HepG2 (cell line): ENCODE measurements at regions of chr9 and their contacts with region 1.

Region 1: GRCh38 chr9:124771021-124771866 is at the start of gene NR6A1:
- DNase-seq: peak; percentile 92
- ATAC-seq: peak; percentile 89
- H3K4me3 ChIP-seq: peak within 1 kb of the TSS; percentile 93 to 96 (median 95)
- H3K27ac ChIP-seq: peak within 1 kb of the TSS; percentile 81
- H3K4me1 ChIP-seq: peaks cover 52% of the 10 kb centered on the region
- H3K27me3 ChIP-seq: peaks cover 0 to 11% of the 10 kb centered on the region in 2 experiments; a peak in 3 of 5 replicates
- CTCF ChIP-seq: no peak; the same call in 1 of the 2 replicates
- EP300 ChIP-seq: peak in 1 of 2 experiments; percentile 11; a peak in 1 of 4 replicates
- POLR2A ChIP-seq: peak; percentile 65 to 69
- RAD21 ChIP-seq: no peak; the same call in 1 of the 2 replicates
- total RNA-seq, gene NR6A1: 31.5 and 50.9 TPM in 2 replicates

Region 2: GRCh38 chr9:124818431-124819281 is 47.4 kb after region 1 on chr9:
- CTCF ChIA-PET with region 1: interaction called, 6 read pairs
- POLR2A ChIA-PET with region 1: interaction called, 10 read pairs
- in situ Hi-C with region 1: no loop called
- intact Hi-C with region 1: loop called (anchors 5 kb)
- DNase-seq: peak; percentile 90
- ATAC-seq: peak; percentile 91
- H3K4me3 ChIP-seq: peak overlapping the region; percentile 48 to 72 (median 54)
- H3K27ac ChIP-seq: peak overlapping the region; percentile 63
- H3K4me1 ChIP-seq: peaks cover 46% of the 10 kb centered on the region
- H3K27me3 ChIP-seq: no peaks in the 10 kb centered on the region
- CTCF ChIP-seq: no peak; the same call in 1 of the 2 replicates
- EP300 ChIP-seq: 0 out of 4 replicates have a peak, but pooled peaks have one; percentile 13 to 19
- POLR2A ChIP-seq: peak; percentile 41 to 67; a peak in 3 of 4 replicates
- RAD21 ChIP-seq: 0 out of 2 replicates have a peak, but pooled peaks have one; percentile 29

Region 3: DNA sequence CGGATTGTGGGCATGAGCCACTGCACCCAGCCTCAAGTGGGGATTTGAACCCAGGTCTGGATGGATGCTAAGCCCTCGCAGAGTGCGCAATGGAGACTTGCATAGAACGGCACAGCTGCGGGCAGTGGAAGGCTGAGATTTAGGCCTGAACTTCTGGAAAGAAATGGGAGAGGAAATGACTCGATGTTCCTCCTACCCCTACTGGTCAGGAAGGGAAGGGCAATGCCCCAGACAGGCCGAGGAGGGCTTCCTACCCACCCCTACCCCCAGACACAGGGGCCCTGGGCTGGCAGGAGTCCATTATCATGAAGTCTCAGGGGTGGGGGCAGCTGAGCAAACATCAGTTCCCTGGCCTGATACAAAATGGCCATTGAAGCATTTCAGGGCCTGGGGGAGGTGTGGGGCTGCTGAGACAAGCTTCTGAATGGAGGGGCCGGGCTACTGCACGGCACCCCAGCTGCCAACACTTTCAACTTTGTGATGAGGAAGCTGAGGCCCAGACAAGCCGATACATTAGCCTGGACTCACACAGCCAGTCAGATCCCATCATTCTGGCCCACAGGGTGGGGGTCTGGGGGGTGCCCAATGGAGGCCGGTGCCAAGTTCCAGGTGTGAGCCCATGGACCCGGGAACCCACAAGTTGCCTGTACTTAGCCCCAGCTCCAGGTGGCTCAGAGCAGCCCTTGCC is 68.5 kb after region 1 on chr9:
- CTCF ChIA-PET with region 1: interaction called, 12 read pairs
- POLR2A ChIA-PET with region 1: no interaction called
- in situ Hi-C with region 1: no loop called
- intact Hi-C with region 1: no loop called
- DNase-seq: peak; percentile 43
- ATAC-seq: peak; percentile 73
- H3K4me3 ChIP-seq: peak overlapping the region in 1 of 3 experiments; percentile 60; a peak in 1 of 6 replicates
- H3K27ac ChIP-seq: no peak overlapping the region
- H3K4me1 ChIP-seq: peaks cover 34% of the 10 kb centered on the region
- H3K27me3 ChIP-seq: peaks cover 0 to 6% of the 10 kb centered on the region in 2 experiments; a peak in 2 of 5 replicates
- CTCF ChIP-seq: peak; percentile 58
- EP300 ChIP-seq: no peak
- POLR2A ChIP-seq: no peak
- RAD21 ChIP-seq: no peak

Region 4: GRCh38 chr9:124852829-124853531 is 81.7 kb after region 1 on chr9 and contains the start of gene WDR38:
- CTCF ChIA-PET with region 1: interaction called, 167 read pairs
- POLR2A ChIA-PET with region 1: interaction called, 39 read pairs
- in situ Hi-C with region 1: loop called (anchors 5 kb)
- intact Hi-C with region 1: loop called (anchors 1 kb)
- DNase-seq: peak; percentile 77
- ATAC-seq: peak; percentile 79
- H3K4me3 ChIP-seq: peak within 1 kb of the TSS; percentile 24 to 69 (median 54); a peak in 5 of 6 replicates
- H3K27ac ChIP-seq: no peak within 1 kb of the TSS
- H3K4me1 ChIP-seq: peaks cover 38% of the 10 kb centered on the region
- H3K27me3 ChIP-seq: no peaks in the 10 kb centered on the region; a peak in 2 of 5 replicates
- CTCF ChIP-seq: peak; percentile 96
- EP300 ChIP-seq: no peak
- POLR2A ChIP-seq: no peak
- RAD21 ChIP-seq: peak; percentile 99
- total RNA-seq, gene WDR38: not detected in 2 replicates

Region 5: GRCh38 chr9:124861342-124862229 is 90.3 kb after region 1 on chr9 and contains the starts of genes ARPC5L and RPL35:
- CTCF ChIA-PET with region 1: interaction called, 10 read pairs
- POLR2A ChIA-PET with region 1: interaction called, 39 read pairs
- in situ Hi-C with region 1: no loop called
- intact Hi-C with region 1: no loop called
- DNase-seq: peak; percentile 78
- ATAC-seq: peak; percentile 90
- H3K4me3 ChIP-seq: peak within 1 kb of the TSS; percentile 89 to 97 (median 91)
- H3K27ac ChIP-seq: peak within 1 kb of the TSS; percentile 95
- H3K4me1 ChIP-seq: peaks cover 44% of the 10 kb centered on the region
- H3K27me3 ChIP-seq: no peaks in the 10 kb centered on the region; a peak in 1 of 5 replicates
- CTCF ChIP-seq: peak; percentile 40
- EP300 ChIP-seq: peak in 1 of 2 experiments; percentile 19; a peak in 1 of 4 replicates
- POLR2A ChIP-seq: peak in 1 of 2 experiments; percentile 85; a peak in 2 of 4 replicates
- RAD21 ChIP-seq: no peak
- total RNA-seq, gene ARPC5L: 33.8 and 35.4 TPM in 2 replicates
- total RNA-seq, gene RPL35: 2,153 and 2,627 TPM in 2 replicates

Region 6: DNA sequence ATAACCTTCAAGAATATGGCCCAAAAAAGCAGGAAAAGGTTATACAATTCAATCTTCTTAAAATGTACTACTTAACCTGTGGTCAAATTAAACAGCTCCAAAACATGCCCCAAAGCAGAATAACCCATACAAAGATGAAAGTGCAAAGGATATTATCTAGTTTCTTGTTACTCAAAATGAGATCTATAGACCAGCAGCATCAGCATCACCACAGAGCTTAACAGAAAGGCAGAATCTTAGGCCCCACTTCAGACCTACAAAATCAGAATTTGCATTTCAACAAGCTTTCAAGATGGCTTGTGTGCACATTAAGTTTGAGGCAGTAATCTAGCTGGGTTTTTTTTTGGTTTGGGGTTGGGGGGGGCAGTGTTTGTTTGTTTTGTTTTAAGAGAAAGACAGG is 318.1 kb after region 1 on chr9:
- CTCF ChIA-PET with region 1: no interaction called
- POLR2A ChIA-PET with region 1: no interaction called
- in situ Hi-C with region 1: no loop called
- intact Hi-C with region 1: no loop called
- DNase-seq: peak; percentile 9
- ATAC-seq: no peak
- H3K4me3 ChIP-seq: no peak overlapping the region
- H3K27ac ChIP-seq: no peak overlapping the region
- H3K4me1 ChIP-seq: peaks cover 15% of the 10 kb centered on the region
- H3K27me3 ChIP-seq: no peaks in the 10 kb centered on the region
- CTCF ChIP-seq: no peak
- EP300 ChIP-seq: no peak
- POLR2A ChIP-seq: no peak
- RAD21 ChIP-seq: no peak

Region 7: DNA sequence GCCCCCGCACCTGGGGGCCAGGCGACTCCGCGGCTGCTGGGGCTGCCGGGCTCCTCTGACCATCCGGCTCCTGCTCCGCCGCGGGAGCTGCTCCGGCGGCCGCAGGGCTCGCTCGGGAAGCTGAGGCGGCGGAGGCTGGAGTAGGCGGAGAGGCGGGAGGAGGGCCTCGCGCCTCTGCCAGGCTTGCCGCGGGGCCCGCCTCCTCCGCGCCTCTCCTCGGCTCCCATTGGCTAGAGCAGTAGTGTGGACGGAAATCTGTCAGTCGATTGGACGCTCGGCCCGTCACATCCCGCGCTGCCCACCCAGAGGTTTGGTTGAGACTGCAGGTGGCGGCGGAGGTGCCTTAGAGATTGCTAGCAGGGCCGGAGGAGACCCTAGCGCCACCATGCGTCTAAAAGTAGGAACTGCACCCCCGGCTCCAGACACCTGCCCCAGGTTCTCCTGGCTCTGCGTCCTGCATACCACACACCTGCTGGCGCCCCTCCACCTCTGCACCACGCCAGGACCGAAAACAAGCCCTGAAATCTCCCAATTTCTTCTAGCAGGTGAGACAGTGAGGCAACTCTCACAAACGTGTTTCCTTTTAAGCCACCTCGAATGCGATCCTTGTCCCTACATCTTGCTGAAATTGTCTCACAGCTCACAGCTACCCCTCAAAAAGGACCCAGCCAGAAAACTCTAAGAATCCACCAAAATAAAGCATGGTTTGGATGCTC is 372.3 kb after region 1 on chr9 and contains the start of gene SCAI:
- CTCF ChIA-PET with region 1: interaction called, 3 read pairs
- POLR2A ChIA-PET with region 1: no interaction called
- in situ Hi-C with region 1: no loop called
- intact Hi-C with region 1: loop called (anchors 10 kb)
- DNase-seq: peak; percentile 97
- ATAC-seq: peak; percentile 99
- H3K4me3 ChIP-seq: peak within 1 kb of the TSS; percentile 55 to 82 (median 71)
- H3K27ac ChIP-seq: peak within 1 kb of the TSS; percentile 56
- H3K4me1 ChIP-seq: peaks cover 20% of the 10 kb centered on the region
- H3K27me3 ChIP-seq: no peaks in the 10 kb centered on the region; a peak in 1 of 5 replicates
- CTCF ChIP-seq: peak; percentile 96
- EP300 ChIP-seq: 0 out of 4 replicates have a peak, but pooled peaks of 1 of the 2 experiments have one; percentile 13
- POLR2A ChIP-seq: peak in 1 of 2 experiments; percentile 66; a peak in 1 of 4 replicates
- RAD21 ChIP-seq: peak; percentile 97
- total RNA-seq, gene SCAI: 8.4 and 10.3 TPM in 2 replicates

Region 8: DNA sequence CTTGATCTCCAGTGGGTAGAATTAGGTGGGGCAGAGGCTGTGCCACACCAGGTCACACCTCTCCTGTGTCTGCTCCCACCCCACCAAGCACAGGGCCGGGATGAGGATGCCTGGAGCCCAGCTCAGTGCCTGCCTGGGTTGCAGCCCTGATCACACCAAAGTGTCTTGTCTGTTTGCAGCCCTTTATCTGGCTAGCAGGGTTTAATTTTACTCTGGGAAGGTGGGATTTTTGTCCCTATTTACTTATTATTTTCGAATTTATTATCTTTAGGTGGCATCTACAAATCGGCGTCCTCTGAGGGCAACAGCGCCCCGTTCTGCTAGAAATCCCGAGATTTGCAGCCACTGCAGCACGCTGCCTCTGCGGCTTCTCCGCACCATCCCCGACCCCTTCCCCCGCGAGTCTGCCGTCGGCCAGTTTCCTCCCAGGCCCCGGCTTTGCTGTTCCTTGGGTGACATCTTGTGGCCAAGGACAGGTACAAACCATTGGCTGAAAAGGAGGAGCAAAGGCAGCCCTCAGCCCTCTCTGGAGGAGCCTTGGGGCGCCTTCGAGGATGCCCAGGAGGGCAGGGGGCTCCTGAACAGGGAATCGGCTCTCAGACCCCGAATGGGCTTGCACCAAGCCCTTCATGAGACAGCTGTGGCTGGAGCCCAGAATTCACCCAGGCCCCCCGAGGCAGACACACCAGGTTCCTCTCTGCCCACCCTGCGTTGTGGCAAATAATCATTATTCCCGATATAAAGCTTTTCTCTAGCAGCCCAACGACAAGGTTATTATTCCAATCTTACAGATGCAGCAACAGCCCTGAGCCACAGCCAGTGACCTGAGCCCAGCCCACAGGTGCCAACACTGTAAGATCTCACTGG is 603.4 kb after region 1 on chr9:
- CTCF ChIA-PET with region 1: interaction called, 4 read pairs
- POLR2A ChIA-PET with region 1: no interaction called
- in situ Hi-C with region 1: loop called (anchors 10 kb)
- intact Hi-C with region 1: loop called (anchors 10 kb)
- DNase-seq: peak; percentile 65
- ATAC-seq: peak; percentile 77
- H3K4me3 ChIP-seq: peak overlapping the region in 2 of 3 experiments; percentile 3 to 58; a peak in 3 of 6 replicates
- H3K27ac ChIP-seq: no peak overlapping the region
- H3K4me1 ChIP-seq: peaks cover 77% of the 10 kb centered on the region
- H3K27me3 ChIP-seq: peaks cover 2 to 17% of the 10 kb centered on the region in 2 experiments; a peak in 3 of 5 replicates
- CTCF ChIP-seq: peak; percentile 96
- EP300 ChIP-seq: no peak
- POLR2A ChIP-seq: no peak
- RAD21 ChIP-seq: peak; percentile 90